Cardiac septum (tissue), 1 donor: ENCODE measurements at regions of chr4 and their contacts with region 1.

Region 1: DNA sequence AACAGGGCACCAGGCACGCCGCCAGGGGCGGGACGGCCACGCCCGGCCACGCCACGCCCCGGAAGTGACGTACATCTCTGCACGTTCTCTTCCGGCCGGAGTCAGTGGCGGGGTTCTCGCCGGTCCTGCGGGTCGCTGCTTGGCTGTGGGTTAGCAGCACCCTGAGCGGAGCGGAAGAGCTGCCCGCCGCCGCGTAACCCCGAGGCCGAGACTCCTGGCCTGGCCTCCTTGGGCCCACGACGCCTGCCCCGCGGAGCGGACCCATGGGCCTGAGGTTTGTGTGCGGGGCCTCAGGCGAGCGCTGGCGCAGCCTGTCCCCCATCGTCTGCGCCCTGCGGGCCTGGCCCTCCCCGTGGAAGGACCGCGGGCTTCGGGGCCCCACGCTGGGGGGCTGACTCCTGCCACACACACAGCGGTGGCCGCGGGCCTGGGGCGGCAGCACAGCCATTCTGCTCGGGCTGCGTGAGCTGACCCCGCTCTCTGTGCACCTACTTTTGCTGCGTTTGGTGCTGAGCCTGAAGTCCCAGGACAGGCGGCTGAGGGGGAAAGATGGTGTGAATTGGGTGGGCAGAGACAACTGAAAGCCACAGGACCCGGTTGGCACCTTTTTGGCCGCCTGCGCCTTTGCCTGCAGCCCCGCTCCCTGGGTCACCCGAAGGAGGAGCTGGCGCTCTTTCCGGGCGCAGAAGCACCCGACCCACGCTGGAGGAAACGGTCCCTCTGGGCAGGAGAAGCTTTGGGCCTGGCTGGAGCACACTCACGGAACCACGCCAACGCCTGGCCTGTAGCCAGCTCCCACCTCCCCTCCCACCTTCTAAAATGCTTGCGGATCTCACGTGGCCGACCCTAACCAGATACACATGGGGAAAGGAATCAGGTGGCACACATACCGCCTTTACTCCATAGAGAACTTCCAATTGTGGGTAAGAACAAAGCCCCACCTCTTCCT is 28.1 kb downstream of the NOP14 start:
- DNase-seq: peak; percentile 96

Region 2: DNA sequence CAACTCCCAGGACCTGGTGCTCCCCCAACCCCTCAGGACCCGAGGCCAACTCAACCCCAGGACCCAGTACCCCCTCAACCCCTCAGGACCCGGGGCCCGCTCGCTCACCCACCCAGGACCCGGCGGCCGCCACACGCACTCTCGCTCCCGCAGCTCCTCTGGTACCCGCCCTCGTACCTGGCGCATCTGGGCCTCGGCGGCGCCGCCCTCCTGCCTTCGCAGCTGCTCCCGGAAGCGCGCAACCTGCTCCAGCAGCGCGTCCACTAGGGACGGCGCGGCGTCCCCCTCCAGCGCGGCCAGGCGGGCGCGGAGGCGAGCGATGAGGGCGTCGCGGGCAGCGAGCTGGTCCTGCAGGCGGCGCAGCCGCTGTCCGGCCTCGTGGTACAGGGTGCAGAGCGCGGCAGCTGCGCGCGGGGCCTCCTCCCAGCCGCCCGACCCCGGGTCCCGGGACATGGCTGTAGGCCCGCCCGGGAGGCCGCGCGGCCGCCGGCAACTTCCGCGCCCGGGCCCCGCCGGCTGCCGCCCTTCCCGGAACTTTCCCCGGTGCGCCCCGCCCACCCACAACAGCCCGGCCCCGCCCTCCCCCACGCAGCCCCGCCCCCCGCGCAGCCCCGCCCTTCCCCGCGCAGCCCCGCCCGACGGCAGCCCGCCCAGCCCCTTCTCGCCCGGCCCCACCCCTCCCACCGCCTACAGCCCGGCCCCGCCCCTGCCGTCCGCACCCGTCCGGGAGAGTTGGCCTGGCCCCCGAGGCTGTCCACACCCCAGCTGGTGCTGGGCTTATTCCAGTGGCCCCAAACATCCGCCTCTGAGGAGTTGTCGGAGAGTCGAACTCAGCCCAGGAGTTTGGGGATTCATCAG is 179.0 kb before region 1 on chr4 and contains the start of gene TNIP2:
- intact Hi-C with region 1: loop called (anchors 2 kb)
- DNase-seq: peak; percentile 95
- total RNA-seq, gene TNIP2: 22.6 TPM

Region 3: GRCh38 chr4:2843263-2843940 is 91.7 kb before region 1 on chr4 and contains the start of gene ADD1:
- intact Hi-C with region 1: loop called (anchors 5 kb)
- DNase-seq: peak; percentile 97
- total RNA-seq, gene ADD1: 213 TPM

Region 4: DNA sequence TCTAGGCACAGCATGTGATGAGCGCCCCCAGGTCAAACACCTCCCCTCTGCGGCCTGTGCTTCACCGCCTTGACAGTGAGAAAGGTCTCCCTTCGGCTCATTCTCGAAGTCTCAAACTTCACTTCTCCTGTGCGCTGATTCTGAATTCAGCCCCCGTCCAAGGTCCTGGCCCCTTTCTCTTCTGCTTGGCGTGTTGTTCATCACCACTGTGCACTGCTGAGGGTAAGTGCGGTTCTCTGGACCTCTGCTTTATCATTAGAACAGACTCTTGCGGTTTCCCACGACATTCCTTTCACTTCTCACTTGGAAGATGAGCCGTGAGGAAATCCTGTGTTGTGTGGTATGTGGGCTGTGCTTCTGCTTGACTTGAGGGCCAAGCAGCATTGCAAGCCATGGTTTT is 127.4 kb after region 1 on chr4:
- intact Hi-C with region 1: no loop called
- DNase-seq: no peak